H1 (cell line): ENCODE measurements at regions of chr9 and their contacts with region 1.

Region 1: GRCh38 chr9:121557581-121558447 is 58.2 kb upstream of the GGTA1 start:
- DNase-seq: no peak
- H3K4me3 ChIP-seq: 0 out of 8 replicates have a peak overlapping the region, but pooled peaks of 1 of the 4 experiments have one; percentile 4
- H3K27ac ChIP-seq: no peak overlapping the region
- H3K4me1 ChIP-seq: peaks cover 0 to 13% (median 9%) of the 10 kb centered on the region in 4 experiments; a peak in 5 of 7 replicates
- H3K27me3 ChIP-seq: no peaks in the 10 kb centered on the region; a peak in 1 of 7 replicates
- CTCF ChIP-seq: no peak
- EP300 ChIP-seq: no peak
- POLR2A ChIP-seq: no peak
- RAD21 ChIP-seq: no peak

Region 2: GRCh38 chr9:121463026-121463807 is 94.6 kb before region 1 on chr9:
- CTCF ChIA-PET with region 1: no interaction called
- POLR2A ChIA-PET with region 1: no interaction called
- DNase-seq: peak; percentile 15 to 87
- H3K4me3 ChIP-seq: no peak overlapping the region
- H3K27ac ChIP-seq: no peak overlapping the region
- H3K4me1 ChIP-seq: peaks cover 0 to 4% (median 1%) of the 10 kb centered on the region in 4 experiments; a peak in 2 of 7 replicates
- H3K27me3 ChIP-seq: no peaks in the 10 kb centered on the region
- CTCF ChIP-seq: peak; percentile 69 to 83 (median 74)
- EP300 ChIP-seq: no peak
- POLR2A ChIP-seq: no peak
- RAD21 ChIP-seq: peak; percentile 45 to 68; a peak in 3 of 4 replicates

Region 3: DNA sequence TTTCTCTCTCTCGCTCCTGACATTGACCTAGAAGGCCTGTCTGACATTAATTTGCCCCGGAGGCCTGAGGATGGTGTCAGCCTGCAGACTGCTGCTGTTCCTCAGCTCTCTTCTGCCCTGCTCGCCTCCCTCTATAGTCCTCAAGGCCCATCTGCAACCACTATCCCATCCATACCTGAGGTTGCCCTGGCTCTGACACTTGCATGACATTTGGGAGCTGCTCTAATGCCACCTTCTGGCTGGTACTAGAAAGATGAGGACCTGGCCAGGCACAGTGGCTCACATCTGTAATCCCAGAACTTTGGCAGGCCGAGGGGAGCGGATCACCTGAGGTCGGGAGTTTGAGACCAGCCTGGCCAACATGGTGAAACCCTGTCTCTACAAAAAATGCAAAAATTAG is 19.6 kb before region 1 on chr9:
- CTCF ChIA-PET with region 1: interaction called, 23 read pairs
- POLR2A ChIA-PET with region 1: no interaction called
- DNase-seq: no peak
- H3K4me3 ChIP-seq: no peak overlapping the region
- H3K27ac ChIP-seq: no peak overlapping the region
- H3K4me1 ChIP-seq: no peaks in the 10 kb centered on the region
- H3K27me3 ChIP-seq: no peaks in the 10 kb centered on the region
- CTCF ChIP-seq: peak; percentile 41 to 66 (median 63)
- EP300 ChIP-seq: no peak
- POLR2A ChIP-seq: no peak
- RAD21 ChIP-seq: peak; percentile 60 to 78

Region 4: GRCh38 chr9:121576281-121577075 is 18.7 kb after region 1 on chr9:
- CTCF ChIA-PET with region 1: interaction called, 57 read pairs
- POLR2A ChIA-PET with region 1: interaction called, 5 read pairs
- DNase-seq: no peak
- H3K4me3 ChIP-seq: no peak overlapping the region
- H3K27ac ChIP-seq: no peak overlapping the region
- H3K4me1 ChIP-seq: peaks cover 0 to 5% (median 2%) of the 10 kb centered on the region in 4 experiments; a peak in 3 of 7 replicates
- H3K27me3 ChIP-seq: no peaks in the 10 kb centered on the region; a peak in 2 of 7 replicates
- CTCF ChIP-seq: no peak
- EP300 ChIP-seq: no peak
- POLR2A ChIP-seq: no peak
- RAD21 ChIP-seq: peak in 1 of 2 experiments; percentile 22; a peak in 2 of 4 replicates

Region 5: GRCh38 chr9:121598965-121599871 is 41.4 kb after region 1 on chr9:
- CTCF ChIA-PET with region 1: interaction called, 28 read pairs
- POLR2A ChIA-PET with region 1: interaction called, 9 read pairs
- DNase-seq: peak; percentile 68 to 90
- H3K4me3 ChIP-seq: peak overlapping the region; percentile 69 to 93 (median 72)
- H3K27ac ChIP-seq: no peak overlapping the region
- H3K4me1 ChIP-seq: peaks cover 3 to 21% (median 8%) of the 10 kb centered on the region in 4 experiments
- H3K27me3 ChIP-seq: peaks cover 0 to 21% (median 14%) of the 10 kb centered on the region in 4 experiments; a peak in 6 of 7 replicates
- CTCF ChIP-seq: no peak
- EP300 ChIP-seq: no peak
- POLR2A ChIP-seq: peak in 1 of 2 experiments; percentile 42; a peak in 1 of 3 replicates
- RAD21 ChIP-seq: no peak

Region 6: DNA sequence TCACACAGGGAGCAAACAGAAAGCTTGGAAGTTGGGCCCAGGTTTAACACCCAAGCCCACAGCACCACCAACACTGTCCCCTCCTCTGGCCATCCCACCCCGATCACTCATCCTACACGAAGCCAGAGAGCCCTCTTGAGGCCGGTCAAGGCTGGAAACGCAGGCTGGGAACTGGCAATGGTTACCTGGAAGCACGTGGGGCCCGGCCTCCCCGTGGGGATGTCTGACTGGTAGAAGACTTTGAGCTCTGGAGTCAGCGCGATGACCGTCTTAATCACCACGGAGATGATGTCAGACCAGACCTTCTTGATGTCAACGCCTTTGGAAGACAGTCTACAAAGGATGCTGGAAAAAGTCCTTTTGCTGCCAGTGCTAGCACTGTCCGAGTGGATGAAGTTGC is 431.2 kb after region 1 on chr9:
- CTCF ChIA-PET with region 1: interaction called, 16 read pairs
- POLR2A ChIA-PET with region 1: no interaction called
- DNase-seq: peak; percentile 33 to 75
- H3K4me3 ChIP-seq: no peak overlapping the region
- H3K27ac ChIP-seq: no peak overlapping the region
- H3K4me1 ChIP-seq: no peaks in the 10 kb centered on the region
- H3K27me3 ChIP-seq: no peaks in the 10 kb centered on the region; a peak in 2 of 7 replicates
- CTCF ChIP-seq: peak; percentile 73 to 84 (median 80)
- EP300 ChIP-seq: no peak
- POLR2A ChIP-seq: no peak
- RAD21 ChIP-seq: peak; percentile 86 to 91